GM12878 (cell line): ENCODE measurements at regions of chr3 and their contacts with region 1.

Region 1: DNA sequence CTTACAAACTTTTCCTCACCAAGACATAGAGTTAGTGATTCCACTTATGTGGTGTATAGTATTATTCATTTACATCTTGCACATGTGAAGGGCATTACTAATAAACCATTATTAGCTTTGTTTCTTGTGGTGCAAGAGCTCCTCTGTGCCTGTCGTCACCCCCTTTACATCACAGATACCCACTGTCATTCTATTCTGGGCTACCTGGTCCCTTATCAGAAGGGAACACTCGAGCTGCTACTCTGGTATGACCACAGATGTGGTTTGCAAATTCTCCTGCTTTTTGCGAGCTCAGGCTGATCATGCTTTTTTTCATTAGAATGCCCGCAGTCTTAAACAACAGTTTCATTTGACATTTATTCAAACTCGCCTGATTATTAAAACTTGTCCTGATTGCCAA is 13.9 kb upstream of the SENP2 start:
- DNase-seq: no peak
- ATAC-seq: no peak
- H3K4me3 ChIP-seq: no peak overlapping the region
- H3K27ac ChIP-seq: no peak overlapping the region
- H3K4me1 ChIP-seq: peaks cover 3% of the 10 kb centered on the region; the same call in 1 of the 2 replicates
- H3K27me3 ChIP-seq: no peaks in the 10 kb centered on the region
- CTCF ChIP-seq: no peak
- EP300 ChIP-seq: no peak
- POLR2A ChIP-seq: no peak
- RAD21 ChIP-seq: no peak

Region 2: GRCh38 chr3:185353823-185354614 is 218.2 kb before region 1 on chr3:
- CTCF ChIA-PET with region 1: interaction called, 40 read pairs
- POLR2A ChIA-PET with region 1: interaction called, 3 read pairs
- RAD21 ChIA-PET with region 1: no interaction called
- SMC1A ChIA-PET with region 1: interaction called, 4 read pairs
- in situ Hi-C with region 1: no loop called
- intact Hi-C with region 1: loop called (anchors 5 kb)
- DNase-seq: peak; percentile 75
- ATAC-seq: peak; percentile 100
- H3K4me3 ChIP-seq: no peak overlapping the region
- H3K27ac ChIP-seq: no peak overlapping the region
- H3K4me1 ChIP-seq: no peaks in the 10 kb centered on the region
- H3K27me3 ChIP-seq: no peaks in the 10 kb centered on the region
- CTCF ChIP-seq: peak; percentile 60 to 77 (median 75)
- EP300 ChIP-seq: no peak
- POLR2A ChIP-seq: no peak
- RAD21 ChIP-seq: peak; percentile 75

Region 3: DNA sequence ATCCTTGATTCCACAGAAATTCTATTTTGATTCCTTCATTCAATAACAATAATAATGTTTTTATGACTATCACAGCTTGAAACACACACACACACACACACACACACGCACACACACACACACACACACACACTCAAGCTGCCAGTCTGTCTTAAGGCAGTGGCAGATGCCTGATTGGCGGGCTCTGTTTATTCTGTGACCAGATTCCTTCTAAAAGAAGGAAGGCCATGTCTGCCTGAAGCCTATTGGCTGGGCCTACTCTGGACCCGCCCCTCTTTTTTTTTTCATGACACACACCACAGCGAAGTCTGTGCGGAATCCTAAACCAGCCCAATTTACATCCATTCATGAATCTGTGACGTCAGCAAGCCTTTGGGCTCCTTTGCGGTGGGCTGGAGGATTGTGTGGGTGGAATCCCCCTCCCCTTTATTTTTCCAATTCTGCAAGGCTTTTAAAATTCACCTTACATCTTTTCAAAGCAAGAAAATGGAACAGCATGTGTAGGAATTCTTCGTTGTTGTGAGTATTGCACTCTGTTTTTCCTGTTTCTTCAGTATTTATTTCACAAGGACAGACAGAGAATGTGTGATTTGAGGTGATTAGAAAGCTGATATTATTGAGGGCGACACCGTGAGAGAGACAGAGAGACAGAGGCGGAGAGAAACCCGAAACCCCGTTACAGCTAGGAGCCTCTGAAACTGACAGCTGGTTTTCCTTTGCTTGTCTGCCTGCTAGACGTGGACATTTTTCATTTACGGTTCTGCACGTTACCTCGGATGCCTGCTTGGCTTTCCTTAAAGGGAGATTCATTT is 209.1 kb before region 1 on chr3 and contains the start of gene MAP3K13:
- CTCF ChIA-PET with region 1: interaction called, 15 read pairs
- POLR2A ChIA-PET with region 1: no interaction called
- RAD21 ChIA-PET with region 1: no interaction called
- SMC1A ChIA-PET with region 1: interaction called, 10 read pairs
- in situ Hi-C with region 1: no loop called
- intact Hi-C with region 1: no loop called
- DNase-seq: peak; percentile 81
- ATAC-seq: peak; percentile 99
- H3K4me3 ChIP-seq: peak within 1 kb of the TSS; percentile 69
- H3K27ac ChIP-seq: peak within 1 kb of the TSS; percentile 66
- H3K4me1 ChIP-seq: peaks cover 8% of the 10 kb centered on the region; the same call in 1 of the 2 replicates
- H3K27me3 ChIP-seq: no peaks in the 10 kb centered on the region
- CTCF ChIP-seq: no peak
- EP300 ChIP-seq: no peak
- POLR2A ChIP-seq: peak; percentile 54; the same call in 1 of the 2 replicates
- RAD21 ChIP-seq: no peak
- polyA plus RNA-seq, gene MAP3K13: 46.6 to 70.8 TPM

Region 4: DNA sequence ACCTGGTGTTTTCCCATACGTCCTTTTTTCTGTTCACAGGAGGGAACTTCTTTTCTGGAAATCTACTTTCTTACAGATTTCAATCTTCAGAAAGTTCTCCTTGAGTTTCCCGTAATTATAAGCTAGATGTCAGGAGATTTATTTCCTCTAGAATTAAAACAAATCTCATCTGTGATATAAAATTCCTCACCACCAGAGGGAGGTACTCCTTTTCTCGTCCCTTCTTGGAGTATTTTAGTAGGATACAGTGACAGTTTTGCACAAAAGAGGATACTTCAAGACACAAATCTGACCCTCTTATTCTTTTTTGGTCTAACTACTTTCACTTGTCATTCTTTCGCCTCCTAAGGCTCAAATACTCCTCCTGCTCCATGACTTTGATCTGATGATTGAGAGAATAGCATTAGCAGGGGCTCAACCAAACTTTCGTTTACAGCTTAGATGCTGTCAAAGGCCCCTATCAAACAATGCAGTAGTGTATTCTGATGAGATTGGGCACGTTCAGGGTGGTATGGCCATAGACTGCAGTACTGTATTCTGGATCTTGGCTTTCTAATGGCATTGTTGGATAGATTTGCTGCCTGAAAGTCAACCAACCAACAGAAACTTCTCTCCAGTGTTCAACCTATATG is 111.3 kb before region 1 on chr3:
- CTCF ChIA-PET with region 1: interaction called, 10 read pairs
- POLR2A ChIA-PET with region 1: no interaction called
- RAD21 ChIA-PET with region 1: interaction called, 6 read pairs
- SMC1A ChIA-PET with region 1: interaction called, 7 read pairs
- in situ Hi-C with region 1: no loop called
- intact Hi-C with region 1: loop called (anchors 5 kb)
- DNase-seq: no peak
- ATAC-seq: no peak
- H3K4me3 ChIP-seq: no peak overlapping the region
- H3K27ac ChIP-seq: no peak overlapping the region
- H3K4me1 ChIP-seq: no peaks in the 10 kb centered on the region
- H3K27me3 ChIP-seq: no peaks in the 10 kb centered on the region
- CTCF ChIP-seq: peak; percentile 11 to 28 (median 23); a peak in 2 of 6 replicates
- EP300 ChIP-seq: no peak
- POLR2A ChIP-seq: no peak
- RAD21 ChIP-seq: no peak

Region 5: DNA sequence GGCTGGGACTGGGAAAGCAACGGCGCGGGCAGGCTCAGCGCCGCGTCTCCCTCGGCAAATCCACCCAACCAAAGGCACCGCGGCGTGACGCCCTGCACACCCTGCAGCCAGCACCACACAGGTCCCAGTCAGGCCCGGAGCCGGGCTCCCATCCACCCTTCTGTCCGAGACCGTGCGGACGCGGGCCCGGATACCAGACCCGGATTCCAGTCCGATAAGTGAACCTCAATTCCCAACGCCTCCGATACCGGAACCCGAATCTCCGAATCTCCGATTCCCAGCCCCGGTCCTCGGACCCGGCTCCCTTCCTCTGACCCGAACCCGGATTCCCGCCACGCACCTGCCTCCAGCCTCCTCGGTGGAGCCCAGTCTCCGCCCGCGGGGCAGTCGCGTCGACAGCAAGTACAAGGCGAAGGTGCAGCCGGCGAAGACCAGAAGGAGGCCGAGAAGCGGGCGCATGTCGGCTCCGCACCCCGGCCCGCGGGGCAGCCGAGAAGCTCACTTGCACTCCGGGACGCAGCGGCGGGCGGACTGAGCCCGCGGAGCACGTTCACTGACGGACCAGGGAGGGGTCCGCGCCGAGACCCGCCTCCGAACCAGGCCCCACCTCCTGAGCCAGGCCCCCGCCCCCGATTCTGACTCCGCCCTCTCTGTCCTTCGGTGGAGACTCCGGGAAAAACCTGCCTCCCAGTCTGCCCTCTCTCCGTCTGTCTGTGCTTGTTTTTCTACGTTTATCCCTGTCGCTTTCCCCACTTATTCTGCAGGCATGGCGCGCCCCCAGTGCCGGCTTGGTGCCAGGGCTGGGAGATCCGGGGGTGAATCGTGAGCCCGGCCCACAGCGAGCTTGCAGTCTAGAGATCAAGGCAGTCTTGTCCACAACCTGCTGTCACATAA is 73.4 kb before region 1 on chr3 and contains the start of gene TMEM41A:
- CTCF ChIA-PET with region 1: interaction called, 7 read pairs
- POLR2A ChIA-PET with region 1: no interaction called
- RAD21 ChIA-PET with region 1: no interaction called
- SMC1A ChIA-PET with region 1: interaction called, 7 read pairs
- in situ Hi-C with region 1: no loop called
- intact Hi-C with region 1: loop called (anchors 1 kb)
- DNase-seq: peak; percentile 53
- ATAC-seq: peak; percentile 98
- H3K4me3 ChIP-seq: peak within 1 kb of the TSS; percentile 92
- H3K27ac ChIP-seq: peak within 1 kb of the TSS; percentile 87
- H3K4me1 ChIP-seq: peaks cover 9% of the 10 kb centered on the region
- H3K27me3 ChIP-seq: no peaks in the 10 kb centered on the region
- CTCF ChIP-seq: no peak
- EP300 ChIP-seq: 0 out of 4 replicates have a peak, but pooled peaks of 1 of the 2 experiments have one; percentile 46
- POLR2A ChIP-seq: peak; percentile 99
- RAD21 ChIP-seq: peak; percentile 14; the same call in 1 of the 2 replicates
- polyA plus RNA-seq, gene TMEM41A: 13.9 to 16.9 TPM

Region 6: GRCh38 chr3:185552358-185552877 is 19.8 kb before region 1 on chr3 and contains the start of gene LIPH:
- CTCF ChIA-PET with region 1: interaction called, 56 read pairs
- POLR2A ChIA-PET with region 1: no interaction called
- RAD21 ChIA-PET with region 1: no interaction called
- SMC1A ChIA-PET with region 1: no interaction called
- in situ Hi-C with region 1: no loop called
- intact Hi-C with region 1: no loop called
- DNase-seq: peak; percentile 61
- ATAC-seq: peak; percentile 81
- H3K4me3 ChIP-seq: peak within 1 kb of the TSS; percentile 65
- H3K27ac ChIP-seq: peak within 1 kb of the TSS; percentile 68
- H3K4me1 ChIP-seq: peaks cover 17% of the 10 kb centered on the region
- H3K27me3 ChIP-seq: no peaks in the 10 kb centered on the region
- CTCF ChIP-seq: no peak
- EP300 ChIP-seq: peak in 1 of 2 experiments; percentile 37; a peak in 1 of 4 replicates
- POLR2A ChIP-seq: no peak
- RAD21 ChIP-seq: no peak
- polyA plus RNA-seq, gene LIPH: 2.2 to 4.7 TPM

Region 7: DNA sequence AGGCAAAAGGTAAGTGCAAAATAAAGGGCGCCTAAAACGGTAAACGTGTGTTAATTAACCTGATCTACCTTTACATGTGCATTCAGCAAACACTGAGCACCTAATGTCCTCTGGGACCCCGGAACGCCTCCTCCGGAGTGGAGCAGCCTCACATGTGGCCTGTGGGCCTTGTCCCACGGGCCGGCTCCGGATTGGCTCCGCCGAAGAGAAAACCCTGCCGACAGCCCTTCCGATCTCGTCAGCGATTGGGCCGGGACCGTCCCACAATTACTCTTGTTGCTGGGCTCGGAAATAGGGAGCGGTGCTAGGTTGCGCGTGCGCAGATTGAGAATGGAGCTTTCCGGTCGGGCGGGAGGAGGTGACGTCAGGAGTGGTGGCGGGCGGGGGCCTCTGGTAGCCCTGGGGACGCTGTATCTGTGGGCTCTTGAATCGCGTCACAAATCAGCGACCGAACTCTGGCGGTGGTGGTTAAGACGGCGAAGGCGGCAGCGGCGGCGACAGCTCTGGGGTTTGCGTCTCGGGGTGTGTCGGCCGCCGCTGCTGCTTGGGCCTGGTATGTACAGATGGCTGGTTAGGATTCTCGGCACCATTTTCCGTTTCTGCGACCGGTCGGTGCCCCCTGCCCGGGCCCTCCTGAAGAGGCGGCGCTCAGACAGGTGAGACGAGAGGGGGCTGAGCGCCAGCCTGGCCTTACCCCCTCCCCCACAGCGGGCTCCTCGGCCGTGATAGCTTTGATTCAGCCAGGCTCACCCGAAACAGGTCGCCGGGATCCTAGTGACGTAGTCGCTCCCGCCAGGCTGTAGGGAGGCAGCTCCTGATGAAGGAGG is 13.9 kb after region 1 on chr3 and contains the start of gene SENP2:
- CTCF ChIA-PET with region 1: interaction called, 14 read pairs
- POLR2A ChIA-PET with region 1: no interaction called
- RAD21 ChIA-PET with region 1: interaction called, 3 read pairs
- SMC1A ChIA-PET with region 1: interaction called, 3 read pairs
- in situ Hi-C with region 1: no loop called
- intact Hi-C with region 1: no loop called
- DNase-seq: peak; percentile 97
- ATAC-seq: peak; percentile 99
- H3K4me3 ChIP-seq: peak within 1 kb of the TSS; percentile 90
- H3K27ac ChIP-seq: peak within 1 kb of the TSS; percentile 87
- H3K4me1 ChIP-seq: peaks cover 18% of the 10 kb centered on the region
- H3K27me3 ChIP-seq: no peaks in the 10 kb centered on the region
- CTCF ChIP-seq: no peak
- EP300 ChIP-seq: peak in 1 of 2 experiments; percentile 59; a peak in 1 of 4 replicates
- POLR2A ChIP-seq: peak; percentile 93
- RAD21 ChIP-seq: no peak
- polyA plus RNA-seq, gene SENP2: 9.0 to 9.7 TPM

Region 8: GRCh38 chr3:185656321-185656840 is 84.2 kb after region 1 on chr3:
- CTCF ChIA-PET with region 1: no interaction called
- POLR2A ChIA-PET with region 1: no interaction called
- RAD21 ChIA-PET with region 1: no interaction called
- SMC1A ChIA-PET with region 1: no interaction called
- in situ Hi-C with region 1: no loop called
- intact Hi-C with region 1: no loop called
- DNase-seq: no peak
- ATAC-seq: no peak
- H3K4me3 ChIP-seq: no peak overlapping the region
- H3K27ac ChIP-seq: no peak overlapping the region
- H3K4me1 ChIP-seq: no peaks in the 10 kb centered on the region
- H3K27me3 ChIP-seq: peaks cover 2 to 3% of the 10 kb centered on the region in 2 experiments; a peak in 3 of 4 replicates
- CTCF ChIP-seq: no peak
- EP300 ChIP-seq: no peak
- POLR2A ChIP-seq: no peak
- RAD21 ChIP-seq: no peak

Region 9: GRCh38 chr3:185667574-185667973 is 95.4 kb after region 1 on chr3:
- CTCF ChIA-PET with region 1: no interaction called
- POLR2A ChIA-PET with region 1: no interaction called
- RAD21 ChIA-PET with region 1: no interaction called
- SMC1A ChIA-PET with region 1: no interaction called
- in situ Hi-C with region 1: no loop called
- intact Hi-C with region 1: no loop called
- DNase-seq: no peak
- ATAC-seq: no peak
- H3K4me3 ChIP-seq: no peak overlapping the region
- H3K27ac ChIP-seq: no peak overlapping the region
- H3K4me1 ChIP-seq: no peaks in the 10 kb centered on the region
- H3K27me3 ChIP-seq: peaks cover 0 to 8% of the 10 kb centered on the region in 2 experiments
- CTCF ChIP-seq: no peak
- EP300 ChIP-seq: no peak
- POLR2A ChIP-seq: no peak
- RAD21 ChIP-seq: no peak

Region 10: GRCh38 chr3:185687271-185687878 is 115.2 kb after region 1 on chr3:
- CTCF ChIA-PET with region 1: no interaction called
- POLR2A ChIA-PET with region 1: no interaction called
- RAD21 ChIA-PET with region 1: no interaction called
- SMC1A ChIA-PET with region 1: no interaction called
- in situ Hi-C with region 1: no loop called
- intact Hi-C with region 1: no loop called
- DNase-seq: no peak
- ATAC-seq: no peak
- H3K4me3 ChIP-seq: no peak overlapping the region
- H3K27ac ChIP-seq: no peak overlapping the region
- H3K4me1 ChIP-seq: no peaks in the 10 kb centered on the region
- H3K27me3 ChIP-seq: no peaks in the 10 kb centered on the region; a peak in 2 of 4 replicates
- CTCF ChIP-seq: no peak
- EP300 ChIP-seq: no peak
- POLR2A ChIP-seq: no peak
- RAD21 ChIP-seq: no peak